ENCODE measurements at regions of chr17 and their contacts with region 1.

Region 1: DNA sequence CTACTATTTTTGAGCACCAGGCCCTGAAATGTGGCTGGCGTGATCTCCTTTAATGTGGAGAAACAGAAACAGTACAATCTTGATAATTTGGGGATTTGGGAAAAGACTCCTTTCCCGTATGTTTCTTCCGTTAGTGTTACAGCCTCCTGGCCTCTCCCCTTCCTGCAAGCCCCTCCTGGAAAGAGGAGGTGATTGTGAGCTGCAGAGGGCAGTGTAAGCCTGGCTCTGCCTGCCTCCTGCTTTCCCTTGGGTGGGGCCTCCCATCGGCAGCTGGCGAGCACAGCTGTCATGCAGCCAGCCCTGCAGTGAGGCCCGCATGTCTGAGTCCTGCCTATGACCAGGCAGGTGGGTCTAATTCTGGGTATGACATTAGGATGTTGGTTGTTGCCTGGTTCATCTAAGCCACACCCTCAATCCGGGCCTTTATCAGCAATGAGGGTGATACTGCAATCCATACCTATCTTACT is 48.7 kb upstream of the WSB1 start:
- DNase-seq: peak; percentile 91
- ATAC-seq: peak; percentile 90

Region 2: GRCh38 chr17:27332485-27333409 is 87.5 kb after region 1 on chr17:
- intact Hi-C with region 1: loop called (anchors 5 kb)
- DNase-seq: peak; percentile 98
- ATAC-seq: peak; percentile 94